Mammary epithelial cell (primary cell): ENCODE measurements at regions of chr1 and their contacts with region 1.

Region 1: GRCh38 chr1:11907275-11908094 is 18.7 kb downstream of the KIAA2013 start:
- DNase-seq: peak; percentile 87
- H3K4me3 ChIP-seq: no peak overlapping the region
- H3K27ac ChIP-seq: peak overlapping the region; percentile 100
- H3K4me1 ChIP-seq: peaks cover 3% of the 10 kb centered on the region
- H3K27me3 ChIP-seq: no peaks in the 10 kb centered on the region
- CTCF ChIP-seq: peak; percentile 70 to 74

Region 2: DNA sequence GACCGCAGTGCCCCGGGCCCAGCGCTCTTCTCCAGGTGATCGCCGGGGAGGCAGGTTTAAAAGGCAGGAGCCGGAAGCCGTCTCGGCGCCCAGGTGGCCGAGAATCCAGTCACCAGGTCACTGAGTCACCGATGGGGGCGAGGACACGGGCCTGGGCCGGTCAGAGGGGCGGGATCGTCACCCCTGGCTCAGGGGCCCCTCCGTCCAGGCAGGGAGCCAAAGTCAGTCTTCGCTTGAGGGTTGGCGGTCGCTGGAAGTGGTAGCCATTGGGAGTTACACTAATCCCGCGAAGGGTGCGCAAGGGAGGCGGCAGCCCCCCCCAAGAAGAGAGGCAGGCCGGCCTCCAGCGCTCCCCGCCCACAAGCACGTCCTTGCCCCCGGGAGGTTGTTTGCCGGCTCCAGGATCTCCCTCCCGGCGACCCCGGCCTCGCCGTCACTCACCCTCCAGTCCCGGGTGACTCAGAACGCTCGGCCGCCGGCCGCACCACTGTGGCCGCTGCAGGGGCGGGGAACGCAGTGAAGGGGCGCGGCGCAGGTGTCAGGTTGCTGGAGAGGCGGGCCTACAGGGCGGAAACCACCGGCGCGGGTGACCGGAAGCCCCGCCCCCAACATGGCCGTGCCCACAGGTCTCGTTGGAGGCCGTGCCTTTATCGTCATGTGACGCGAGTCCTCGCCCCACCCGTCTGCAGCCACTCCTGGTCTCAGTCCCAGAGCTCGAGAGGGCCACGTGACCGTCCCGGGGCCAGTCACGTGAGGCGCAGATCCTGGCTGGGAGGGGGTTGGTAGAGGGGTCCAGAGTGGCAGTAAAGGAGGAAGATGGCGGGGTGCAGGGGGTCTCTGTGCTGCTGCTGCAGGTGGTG is 101.8 kb before region 1 on chr1 and contains the starts of genes CLCN6 and MTHFR:
- CTCF ChIA-PET with region 1: no interaction called
- dilution Hi-C with region 1: no loop called
- in situ Hi-C with region 1: no loop called
- intact Hi-C with region 1: loop called (anchors 1 kb)
- DNase-seq: peak; percentile 99
- H3K4me3 ChIP-seq: peak within 1 kb of the TSS; percentile 50 to 87 (median 71)
- H3K27ac ChIP-seq: peak within 1 kb of the TSS; percentile 90
- H3K4me1 ChIP-seq: peaks cover 50% of the 10 kb centered on the region
- H3K27me3 ChIP-seq: no peaks in the 10 kb centered on the region
- CTCF ChIP-seq: no peak
- total RNA-seq, gene CLCN6: 7.0 to 17.0 TPM
- total RNA-seq, gene MTHFR: 19.1 to 19.2 TPM

Region 3: GRCh38 chr1:11940260-11940921 is 32.9 kb after region 1 on chr1:
- CTCF ChIA-PET with region 1: no interaction called
- dilution Hi-C with region 1: no loop called
- in situ Hi-C with region 1: no loop called
- intact Hi-C with region 1: no loop called
- DNase-seq: peak; percentile 43
- H3K4me3 ChIP-seq: no peak overlapping the region
- H3K27ac ChIP-seq: no peak overlapping the region
- H3K4me1 ChIP-seq: peaks cover 8% of the 10 kb centered on the region
- H3K27me3 ChIP-seq: no peaks in the 10 kb centered on the region
- CTCF ChIP-seq: no peak

Region 4: DNA sequence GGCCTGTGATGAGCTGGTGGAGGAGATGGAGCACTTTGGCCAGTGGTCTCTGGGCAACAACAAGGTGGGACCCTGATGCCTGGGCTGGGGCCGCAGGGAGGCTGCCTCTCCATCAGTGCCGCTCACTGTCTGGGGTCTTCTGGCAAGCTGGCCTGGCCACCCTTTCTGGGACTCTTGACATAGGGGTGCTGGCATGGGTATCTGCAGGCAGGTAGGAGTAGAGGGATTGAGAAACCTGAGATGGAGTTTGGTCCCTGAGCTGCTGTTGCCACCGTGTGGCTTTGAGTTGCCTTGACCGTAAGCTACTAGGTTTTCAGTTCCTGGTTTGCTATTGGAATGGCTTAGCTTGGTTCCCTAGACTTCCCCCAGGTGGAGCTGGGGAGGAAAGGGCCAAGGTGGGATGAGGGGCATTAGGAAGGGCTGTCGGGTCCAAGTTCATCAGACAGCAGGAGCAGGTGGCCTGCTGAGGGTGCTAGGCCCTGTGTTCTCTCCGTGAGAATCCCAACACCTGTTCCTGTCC is 59.6 kb after region 1 on chr1:
- CTCF ChIA-PET with region 1: interaction called, 7 read pairs
- dilution Hi-C with region 1: no loop called
- in situ Hi-C with region 1: no loop called
- intact Hi-C with region 1: loop called (anchors 1 kb)
- DNase-seq: peak; percentile 48
- H3K4me3 ChIP-seq: no peak overlapping the region
- H3K27ac ChIP-seq: no peak overlapping the region
- H3K4me1 ChIP-seq: no peaks in the 10 kb centered on the region
- H3K27me3 ChIP-seq: no peaks in the 10 kb centered on the region
- CTCF ChIP-seq: peak; percentile 67 to 86

Region 5: DNA sequence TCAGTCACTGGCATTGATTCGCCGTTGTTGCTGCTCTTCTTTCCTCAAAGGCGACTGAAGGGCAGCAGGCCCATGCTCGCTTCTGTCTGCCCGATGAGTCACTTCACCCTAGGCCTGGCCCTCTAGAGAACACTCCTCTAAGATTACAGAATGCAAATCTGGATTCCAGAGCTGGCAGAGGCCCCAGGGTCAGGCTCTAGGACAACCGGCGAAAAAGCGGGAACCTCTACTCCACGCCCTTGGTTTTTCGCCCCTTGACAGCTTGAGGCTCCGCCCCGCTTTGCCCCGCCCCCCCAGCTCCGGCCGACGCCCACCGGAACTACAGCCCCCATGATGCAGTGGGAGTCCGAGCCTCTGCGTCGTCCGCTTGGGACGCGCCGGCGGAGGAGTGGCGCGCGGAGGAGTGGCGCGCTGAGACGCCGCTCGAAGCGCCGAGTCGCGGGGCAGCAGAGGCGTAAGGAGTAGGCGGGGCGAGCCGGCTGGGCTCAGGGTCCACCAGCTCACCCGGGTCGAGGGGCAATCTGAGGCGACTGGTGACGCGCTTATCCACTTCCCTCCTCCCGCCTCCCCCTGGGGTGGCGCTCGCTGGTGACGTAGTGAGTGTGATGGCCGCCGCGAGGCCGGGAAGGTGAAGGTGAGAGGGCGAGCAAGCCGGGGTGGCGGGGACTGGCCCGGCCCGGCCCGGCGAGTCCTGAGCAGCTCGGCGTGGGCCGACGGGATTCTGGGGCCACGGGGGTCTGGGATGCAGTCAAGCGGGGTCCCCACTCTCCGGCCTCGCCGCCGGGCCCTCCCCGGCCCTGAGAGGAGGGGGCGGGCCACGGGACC is 72.6 kb after region 1 on chr1 and contains the start of gene MFN2:
- CTCF ChIA-PET with region 1: no interaction called
- dilution Hi-C with region 1: no loop called
- in situ Hi-C with region 1: no loop called
- intact Hi-C with region 1: loop called (anchors 1 kb)
- DNase-seq: peak; percentile 98
- H3K4me3 ChIP-seq: peak within 1 kb of the TSS; percentile 67 to 95 (median 89)
- H3K27ac ChIP-seq: peak within 1 kb of the TSS; percentile 91
- H3K4me1 ChIP-seq: peaks cover 35% of the 10 kb centered on the region
- H3K27me3 ChIP-seq: no peaks in the 10 kb centered on the region
- CTCF ChIP-seq: no peak
- total RNA-seq, gene MFN2: 106 to 133 TPM

Region 6: GRCh38 chr1:12031039-12031980 is 123.8 kb after region 1 on chr1:
- CTCF ChIA-PET with region 1: no interaction called
- dilution Hi-C with region 1: loop called (anchors 10 kb)
- in situ Hi-C with region 1: no loop called
- intact Hi-C with region 1: loop called (anchors 1 kb)
- DNase-seq: peak; percentile 12
- H3K4me3 ChIP-seq: no peak overlapping the region
- H3K27ac ChIP-seq: no peak overlapping the region
- H3K4me1 ChIP-seq: no peaks in the 10 kb centered on the region
- H3K27me3 ChIP-seq: no peaks in the 10 kb centered on the region
- CTCF ChIP-seq: peak; percentile 32 to 52

Region 7: DNA sequence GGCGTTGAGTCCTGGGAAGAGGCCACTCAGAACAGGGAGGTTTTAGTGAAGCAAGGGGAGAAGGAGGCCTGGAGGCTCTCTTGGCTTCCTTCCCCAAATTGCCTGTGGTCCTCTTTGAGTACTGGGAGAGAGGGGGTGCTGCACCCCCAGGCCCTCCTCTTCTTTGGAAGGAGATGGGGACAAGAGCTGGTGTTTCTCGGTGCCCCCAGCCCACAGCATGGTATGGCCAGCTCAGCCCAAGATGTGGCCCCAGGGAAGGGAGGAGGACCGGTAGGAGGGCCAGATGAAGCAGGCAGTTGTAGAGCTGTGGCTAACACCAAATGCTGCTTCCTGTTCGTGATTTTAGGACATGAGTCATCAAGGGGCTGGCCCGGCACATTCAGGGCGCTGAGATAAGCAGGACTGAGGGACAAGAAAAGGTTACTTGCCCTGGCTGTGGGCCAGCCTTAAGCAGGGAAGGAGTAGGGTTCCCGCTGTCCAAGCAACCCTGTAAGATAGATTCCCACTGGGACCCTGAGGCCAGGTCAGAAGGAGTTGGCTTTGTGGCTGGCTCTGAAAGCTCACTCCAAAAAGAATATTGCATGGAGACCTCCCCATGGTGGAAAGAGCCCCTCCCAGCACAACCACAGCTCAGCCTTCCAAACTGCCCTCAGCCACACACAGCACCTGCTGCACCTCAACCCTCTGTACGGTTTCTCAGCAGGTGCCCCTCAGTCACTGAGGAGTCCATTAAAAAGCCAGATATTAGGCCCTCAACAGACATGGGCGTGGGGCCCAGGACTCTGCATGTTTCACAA is 254.4 kb after region 1 on chr1:
- CTCF ChIA-PET with region 1: no interaction called
- dilution Hi-C with region 1: no loop called
- in situ Hi-C with region 1: no loop called
- intact Hi-C with region 1: no loop called
- DNase-seq: peak; percentile 80
- H3K4me3 ChIP-seq: no peak overlapping the region
- H3K27ac ChIP-seq: no peak overlapping the region
- H3K4me1 ChIP-seq: peaks cover 14% of the 10 kb centered on the region
- H3K27me3 ChIP-seq: peaks cover 3% of the 10 kb centered on the region
- CTCF ChIP-seq: no peak

Region 8: GRCh38 chr1:12208764-12209494 is 301.4 kb after region 1 on chr1:
- CTCF ChIA-PET with region 1: no interaction called
- dilution Hi-C with region 1: no loop called
- in situ Hi-C with region 1: no loop called
- intact Hi-C with region 1: loop called (anchors 5 kb)
- DNase-seq: peak; percentile 57
- H3K4me3 ChIP-seq: no peak overlapping the region
- H3K27ac ChIP-seq: no peak overlapping the region
- H3K4me1 ChIP-seq: peaks cover 8% of the 10 kb centered on the region
- H3K27me3 ChIP-seq: no peaks in the 10 kb centered on the region
- CTCF ChIP-seq: peak; percentile 90 to 93

Region 9: GRCh38 chr1:12272770-12273169 is 365.3 kb after region 1 on chr1:
- CTCF ChIA-PET with region 1: no interaction called
- dilution Hi-C with region 1: no loop called
- in situ Hi-C with region 1: no loop called
- intact Hi-C with region 1: no loop called
- DNase-seq: no peak
- H3K4me3 ChIP-seq: no peak overlapping the region
- H3K27ac ChIP-seq: no peak overlapping the region
- H3K4me1 ChIP-seq: no peaks in the 10 kb centered on the region
- H3K27me3 ChIP-seq: no peaks in the 10 kb centered on the region
- CTCF ChIP-seq: no peak